Activated B cell treated with CpG ODN at 0.5 μM for 24 hours (primary cell): ENCODE measurements at regions of chr15 and their contacts with region 1.

Region 1: GRCh38 chr15:51829360-51830275 is at the start of gene TMOD3:
- DNase-seq: peak; percentile 94
- ATAC-seq: peak; percentile 93
- H3K4me3 Mint-ChIP-seq: peak within 1 kb of the TSS; percentile 96
- H3K27ac Mint-ChIP-seq: peak within 1 kb of the TSS; percentile 87
- H3K4me1 Mint-ChIP-seq: peaks cover 41% of the 10 kb centered on the region
- H3K27me3 Mint-ChIP-seq: no peaks in the 10 kb centered on the region
- CTCF ChIP-seq: no peak
- total RNA-seq, gene TMOD3: 39.0 and 47.0 TPM in 2 replicates

Region 2: DNA sequence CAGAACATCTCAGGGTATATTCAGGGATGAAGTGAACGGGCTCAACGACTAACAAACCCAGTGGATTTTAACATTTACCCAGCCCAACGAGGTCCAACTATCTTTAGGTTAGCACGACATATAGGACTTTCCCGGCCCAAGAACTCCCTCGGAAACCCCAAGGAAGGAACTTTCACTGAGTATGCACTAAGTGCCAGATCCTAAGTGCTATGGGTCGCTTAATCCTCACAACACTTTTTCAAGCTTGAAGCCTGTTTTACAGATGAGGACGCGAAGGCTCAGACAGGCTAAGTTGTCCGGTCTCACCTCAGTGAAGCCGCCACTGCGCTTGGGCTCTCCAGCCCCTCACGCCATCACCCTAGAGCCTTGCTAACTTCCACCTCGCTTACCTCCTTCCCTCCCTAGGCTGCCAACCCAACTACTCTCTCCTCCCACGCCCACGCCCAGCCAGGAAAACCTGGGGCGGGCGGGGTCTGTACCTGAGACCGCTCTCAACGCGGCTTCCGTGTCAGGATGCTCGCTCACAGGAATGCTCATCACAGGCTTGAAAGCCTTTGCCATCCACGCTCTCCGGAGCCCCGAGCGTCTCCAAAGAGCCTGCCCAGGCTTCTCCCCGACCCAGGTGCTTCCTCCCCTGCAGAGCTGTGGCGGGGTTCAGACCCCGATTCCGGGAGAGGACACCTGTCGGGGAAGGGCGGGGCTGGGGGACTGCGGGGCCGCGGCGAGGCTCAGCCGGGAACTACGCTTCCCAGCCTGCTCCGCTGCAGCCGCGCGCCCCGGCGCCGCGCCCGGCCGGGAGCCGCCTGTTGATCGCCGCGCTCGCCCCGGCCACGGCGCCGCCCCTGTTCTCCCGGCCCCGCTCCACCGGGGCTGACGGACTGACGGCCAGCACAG is 78.6 kb before region 1 on chr15 and contains the start of gene TMOD2:
- CTCF ChIA-PET with region 1: no interaction called
- POLR2A ChIA-PET with region 1: no interaction called
- intact Hi-C with region 1: loop called (anchors 1 kb)
- DNase-seq: peak; percentile 62
- ATAC-seq: peak; percentile 83
- H3K4me3 Mint-ChIP-seq: peak within 1 kb of the TSS; percentile 96
- H3K27ac Mint-ChIP-seq: peak within 1 kb of the TSS; percentile 86
- H3K4me1 Mint-ChIP-seq: peaks cover 37% of the 10 kb centered on the region
- H3K27me3 Mint-ChIP-seq: no peaks in the 10 kb centered on the region
- CTCF ChIP-seq: no peak
- total RNA-seq, gene TMOD2: 11.3 and 14.6 TPM in 2 replicates

Region 3: GRCh38 chr15:51842852-51843737 is 13.5 kb after region 1 on chr15:
- CTCF ChIA-PET with region 1: no interaction called
- POLR2A ChIA-PET with region 1: interaction called, 3 read pairs
- intact Hi-C with region 1: loop called (anchors 1 kb)
- DNase-seq: no peak
- ATAC-seq: peak; percentile 72
- H3K4me3 Mint-ChIP-seq: no peak overlapping the region
- H3K27ac Mint-ChIP-seq: peak overlapping the region; percentile 3
- H3K4me1 Mint-ChIP-seq: peaks cover 72% of the 10 kb centered on the region
- H3K27me3 Mint-ChIP-seq: no peaks in the 10 kb centered on the region
- CTCF ChIP-seq: no peak

Region 4: DNA sequence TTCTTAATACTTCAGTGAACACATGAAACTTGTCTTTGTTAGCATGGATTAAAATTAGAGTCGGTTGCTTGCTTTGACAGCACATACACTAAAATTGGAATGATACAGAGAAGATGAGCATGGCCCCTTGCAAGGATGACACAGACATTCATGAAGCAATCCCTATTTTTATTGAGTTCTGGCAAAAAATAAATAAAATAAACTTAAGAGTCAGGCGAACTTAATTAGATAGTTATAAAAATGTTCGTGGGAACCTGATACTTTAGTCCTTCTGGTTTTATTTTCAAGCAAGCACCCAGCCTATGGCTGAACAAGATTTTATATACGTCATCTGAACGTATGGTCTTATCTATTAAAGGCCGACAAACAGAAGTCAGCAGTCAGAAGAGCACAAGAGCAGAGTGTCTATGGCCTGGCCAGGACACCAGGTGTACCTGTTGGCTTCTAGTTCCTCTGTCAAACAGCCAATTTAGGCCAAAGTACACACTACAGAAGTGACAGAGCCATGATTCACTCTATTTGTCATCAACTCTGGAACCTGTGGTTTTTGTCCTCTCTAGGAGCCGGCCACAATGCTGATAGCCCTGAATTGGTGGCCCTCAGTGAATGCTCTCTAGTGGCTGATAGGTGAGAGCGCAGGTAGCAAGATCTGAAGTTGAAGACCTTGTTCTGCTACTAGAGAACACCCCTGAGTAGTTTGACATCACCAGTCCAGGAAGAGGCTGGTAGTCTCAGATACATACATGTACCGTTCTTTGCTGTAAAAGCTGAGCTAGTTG is 77.7 kb after region 1 on chr15:
- CTCF ChIA-PET with region 1: no interaction called
- POLR2A ChIA-PET with region 1: no interaction called
- intact Hi-C with region 1: no loop called
- DNase-seq: no peak
- ATAC-seq: no peak
- H3K4me3 Mint-ChIP-seq: no peak overlapping the region
- H3K27ac Mint-ChIP-seq: no peak overlapping the region
- H3K4me1 Mint-ChIP-seq: no peaks in the 10 kb centered on the region
- H3K27me3 Mint-ChIP-seq: no peaks in the 10 kb centered on the region
- CTCF ChIP-seq: no peak

Region 5: DNA sequence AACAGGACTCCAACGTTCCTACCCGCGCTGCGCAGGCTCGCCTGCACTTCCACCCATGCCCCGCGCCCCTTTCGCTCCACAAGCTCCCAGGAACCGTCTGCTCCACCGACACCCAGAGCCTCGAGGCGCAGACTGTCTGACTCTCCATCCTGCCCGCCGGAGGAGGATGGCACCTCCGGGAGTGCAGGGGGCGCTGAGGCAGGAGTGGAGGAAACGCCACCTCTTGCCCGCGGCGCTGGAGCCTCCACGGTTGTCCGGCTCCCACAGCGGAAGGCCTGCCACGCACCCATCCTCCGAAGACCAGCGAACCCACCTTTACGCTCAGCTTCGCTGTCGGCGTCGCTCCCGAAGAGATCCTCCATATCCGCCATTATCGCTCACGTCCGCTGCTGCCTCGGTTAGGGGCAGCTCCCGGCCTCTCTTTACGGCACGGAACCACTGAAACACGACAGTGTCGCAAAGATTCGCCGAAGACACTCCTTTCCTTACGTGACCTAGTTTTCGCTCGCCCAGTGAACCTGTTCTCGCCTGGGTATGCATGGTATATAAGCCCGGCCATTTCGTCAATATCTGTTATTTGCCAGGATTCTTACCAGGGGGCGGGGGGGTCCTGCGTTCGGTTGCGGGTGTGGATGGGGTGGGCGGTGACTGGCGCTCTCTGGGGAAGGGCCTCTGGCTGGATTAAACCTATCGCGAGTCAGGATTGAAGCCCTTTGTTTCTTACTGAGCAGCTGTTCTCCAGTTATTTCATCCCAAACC is 141.9 kb after region 1 on chr15 and contains the start of gene LEO1:
- CTCF ChIA-PET with region 1: no interaction called
- POLR2A ChIA-PET with region 1: no interaction called
- intact Hi-C with region 1: loop called (anchors 5 kb)
- DNase-seq: peak; percentile 69
- ATAC-seq: peak; percentile 96
- H3K4me3 Mint-ChIP-seq: peak within 1 kb of the TSS; percentile 100
- H3K27ac Mint-ChIP-seq: peak within 1 kb of the TSS; percentile 99
- H3K4me1 Mint-ChIP-seq: peaks cover 21% of the 10 kb centered on the region
- H3K27me3 Mint-ChIP-seq: no peaks in the 10 kb centered on the region
- CTCF ChIP-seq: no peak
- total RNA-seq, gene LEO1: 18.3 and 19.1 TPM in 2 replicates